ENCODE measurements at regions of chr2 and their contacts with region 1.

Region 1: DNA sequence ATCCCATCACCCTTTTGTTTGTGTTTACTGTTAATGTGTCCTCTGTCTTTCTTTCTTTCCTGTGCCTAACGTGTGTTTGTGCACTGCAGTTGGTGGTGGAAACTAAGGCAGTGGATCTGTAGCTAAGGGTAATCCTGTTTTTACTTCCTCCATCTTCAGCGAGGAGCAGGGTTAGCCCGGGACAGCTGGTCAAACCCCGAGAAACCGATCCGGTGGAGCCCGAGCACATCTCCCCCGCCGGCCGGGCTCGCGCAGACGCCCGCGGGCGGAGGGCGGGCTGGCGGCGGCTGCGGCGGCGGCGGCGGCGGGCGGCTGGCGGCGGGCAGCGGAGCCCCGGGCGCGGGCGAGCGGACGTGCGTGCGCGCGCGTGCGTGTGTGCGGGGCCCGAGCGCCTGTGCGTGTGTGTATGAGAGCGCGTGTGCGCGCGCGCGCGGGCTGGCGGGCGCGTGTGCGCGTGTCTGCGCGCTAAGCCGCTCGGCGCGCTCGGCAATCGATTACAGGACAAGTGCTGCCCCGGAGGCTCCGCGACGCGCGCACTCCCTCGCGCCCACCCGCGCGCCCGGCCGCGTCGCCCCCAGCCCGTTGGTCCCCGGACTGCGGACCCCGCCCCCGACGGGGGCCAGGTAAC is at the start of gene IKZF2:
- DNase-seq: peak; percentile 91
- H3K4me3 ChIP-seq: peak within 1 kb of the TSS; percentile 56 to 85 (median 80)
- H3K27ac ChIP-seq: peak within 1 kb of the TSS; percentile 94 to 98 (median 97)
- H3K4me1 ChIP-seq: peaks cover 0 to 31% (median 18%) of the 10 kb centered on the region in 4 donors
- H3K27me3 ChIP-seq: no peaks in the 10 kb centered on the region
- CTCF ChIP-seq: no peak
- EP300 ChIP-seq: no peak
- POLR2A ChIP-seq: no peak
- total RNA-seq, gene IKZF2: 5.5 to 14.9 (median 10.5) TPM

Region 2: DNA sequence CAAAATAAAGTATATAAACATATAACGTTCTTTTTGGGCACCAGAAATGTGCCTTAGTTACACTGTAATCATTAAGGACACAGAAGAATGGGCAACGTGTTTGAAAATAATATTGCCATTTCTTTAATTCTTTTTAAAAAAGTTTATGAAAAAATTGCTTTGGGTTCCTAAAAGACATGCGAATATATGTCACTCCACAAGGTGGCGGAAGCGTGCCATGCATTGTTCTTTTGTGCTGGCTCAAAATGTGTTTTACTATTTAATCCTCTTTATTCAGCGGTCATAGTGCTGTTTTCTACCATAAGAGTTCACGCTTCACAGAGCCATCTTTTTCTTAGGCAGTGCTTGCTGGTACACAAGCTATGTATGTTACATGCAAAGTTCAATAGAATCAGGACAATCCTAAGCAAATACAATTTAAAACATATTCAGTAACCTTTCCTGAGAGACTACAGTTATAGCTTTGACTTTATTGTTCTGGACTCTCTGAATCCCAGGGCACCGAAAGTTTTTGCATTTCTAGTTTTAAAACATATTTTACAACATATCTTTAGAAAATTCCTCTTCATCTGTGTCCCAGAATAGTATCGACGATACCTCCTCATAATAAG is 465.2 kb before region 1 on chr2:
- intact Hi-C with region 1: loop called (anchors 2 kb)
- DNase-seq: peak; percentile 64
- H3K4me3 ChIP-seq: no peak overlapping the region
- H3K27ac ChIP-seq: no peak overlapping the region
- H3K4me1 ChIP-seq: no peaks in the 10 kb centered on the region
- H3K27me3 ChIP-seq: no peaks in the 10 kb centered on the region
- CTCF ChIP-seq: peak in 3 of 4 experiments; percentile 40 to 83 (median 62)
- EP300 ChIP-seq: no peak
- POLR2A ChIP-seq: no peak

Region 3: GRCh38 chr2:212777020-212777491 is 374.5 kb before region 1 on chr2:
- intact Hi-C with region 1: loop called (anchors 5 kb)
- DNase-seq: no peak
- H3K4me3 ChIP-seq: no peak overlapping the region
- H3K27ac ChIP-seq: no peak overlapping the region
- H3K4me1 ChIP-seq: no peaks in the 10 kb centered on the region
- H3K27me3 ChIP-seq: no peaks in the 10 kb centered on the region
- CTCF ChIP-seq: peak in 3 of 4 experiments; percentile 7 to 61 (median 45)
- EP300 ChIP-seq: no peak
- POLR2A ChIP-seq: no peak

Region 4: DNA sequence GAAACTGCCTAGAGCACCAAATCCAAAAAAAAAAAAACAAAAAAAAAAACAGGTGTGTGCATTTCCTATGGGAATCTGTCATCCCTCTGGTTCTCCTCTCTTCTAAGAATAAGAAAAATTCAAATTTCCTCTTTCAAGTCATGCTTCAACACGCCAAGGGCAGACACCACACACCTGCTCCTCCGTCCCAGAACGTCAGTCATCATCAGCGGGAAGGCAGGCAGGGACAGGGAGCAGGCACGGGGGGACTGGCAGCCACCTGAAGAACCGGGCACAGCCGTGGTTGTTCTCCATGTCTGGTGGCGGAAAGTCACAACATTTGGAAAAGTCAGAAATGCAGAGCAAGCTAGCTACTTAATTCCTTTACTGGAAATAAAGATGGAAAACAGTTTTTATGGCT is 215.0 kb before region 1 on chr2:
- intact Hi-C with region 1: no loop called
- DNase-seq: no peak
- H3K4me3 ChIP-seq: no peak overlapping the region
- H3K27ac ChIP-seq: no peak overlapping the region
- H3K4me1 ChIP-seq: peaks cover 0 to 7% (median 6%) of the 10 kb centered on the region in 4 donors
- H3K27me3 ChIP-seq: no peaks in the 10 kb centered on the region
- CTCF ChIP-seq: no peak
- EP300 ChIP-seq: no peak
- POLR2A ChIP-seq: no peak

Region 5: DNA sequence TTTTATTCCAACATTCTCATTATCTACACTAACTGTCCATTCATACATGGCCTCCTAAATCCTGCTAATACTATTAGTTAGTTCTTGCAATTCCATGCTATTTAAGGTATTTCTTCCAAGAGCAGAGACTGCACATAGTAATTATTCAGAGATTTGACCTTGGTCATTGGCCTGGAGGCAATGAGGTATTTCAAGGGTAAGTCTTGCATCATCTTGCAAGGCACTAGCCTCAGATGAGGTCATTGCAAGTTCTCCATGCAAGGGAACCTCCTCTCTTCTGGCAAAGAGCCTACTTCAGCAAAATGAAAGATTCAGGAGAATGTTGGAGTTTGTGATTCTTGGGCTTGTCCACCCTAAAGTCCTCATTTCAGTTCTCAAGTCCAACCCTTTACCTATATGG is 48.3 kb after region 1 on chr2:
- intact Hi-C with region 1: no loop called
- DNase-seq: no peak
- H3K4me3 ChIP-seq: no peak overlapping the region
- H3K27ac ChIP-seq: no peak overlapping the region
- H3K4me1 ChIP-seq: peaks cover 0 to 11% (median 5%) of the 10 kb centered on the region in 4 donors
- H3K27me3 ChIP-seq: no peaks in the 10 kb centered on the region
- CTCF ChIP-seq: no peak
- EP300 ChIP-seq: no peak
- POLR2A ChIP-seq: no peak

Region 6: GRCh38 chr2:213284105-213285090 is 132.8 kb after region 1 on chr2 and contains the start of gene SPAG16:
- intact Hi-C with region 1: loop called (anchors 2 kb)
- DNase-seq: peak; percentile 98
- H3K4me3 ChIP-seq: peak within 1 kb of the TSS; percentile 77 to 87 (median 80)
- H3K27ac ChIP-seq: peak within 1 kb of the TSS; percentile 76 to 83 (median 78)
- H3K4me1 ChIP-seq: peaks cover 0 to 21% (median 12%) of the 10 kb centered on the region in 4 donors
- H3K27me3 ChIP-seq: no peaks in the 10 kb centered on the region
- CTCF ChIP-seq: no peak
- EP300 ChIP-seq: no peak
- POLR2A ChIP-seq: no peak
- total RNA-seq, gene SPAG16: 27.1 to 70.3 (median 49.0) TPM

Region 7: GRCh38 chr2:214809751-214810564 is 1658.4 kb after region 1 on chr2:
- intact Hi-C with region 1: loop called (anchors 5 kb)
- DNase-seq: peak; percentile 99
- H3K4me3 ChIP-seq: peak overlapping the region; percentile 57 to 84 (median 74)
- H3K27ac ChIP-seq: peak overlapping the region; percentile 87 to 97 (median 95)
- H3K4me1 ChIP-seq: peaks cover 0 to 20% (median 12%) of the 10 kb centered on the region in 4 donors
- H3K27me3 ChIP-seq: no peaks in the 10 kb centered on the region
- CTCF ChIP-seq: no peak
- EP300 ChIP-seq: no peak
- POLR2A ChIP-seq: peak in 1 of 2 donors; percentile 23